ENCODE measurements at regions of chr10 and their contacts with region 1.

Region 1: DNA sequence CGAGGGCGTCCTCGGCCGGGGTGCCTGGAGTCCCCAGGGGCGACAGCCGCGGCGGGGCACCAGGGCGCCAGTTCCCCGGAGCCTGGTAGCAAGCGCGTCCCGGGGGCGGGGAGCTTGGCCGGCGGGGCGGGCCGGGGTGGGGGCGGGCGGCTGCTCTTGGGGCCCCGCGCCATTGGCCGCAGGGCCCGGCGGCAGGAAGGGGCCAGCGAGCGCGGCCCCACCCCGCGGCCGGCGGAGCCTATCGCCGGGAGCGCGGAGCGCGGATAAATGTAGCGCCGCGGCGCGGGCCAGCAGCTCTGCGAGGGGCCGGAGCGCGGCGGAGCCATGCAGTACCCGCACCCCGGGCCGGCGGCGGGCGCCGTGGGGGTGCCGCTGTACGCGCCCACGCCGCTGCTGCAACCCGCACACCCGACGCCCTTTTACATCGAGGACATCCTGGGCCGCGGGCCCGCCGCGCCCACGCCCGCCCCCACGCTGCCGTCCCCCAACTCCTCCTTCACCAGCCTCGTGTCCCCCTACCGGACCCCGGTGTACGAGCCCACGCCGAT is at the start of gene HHEX:
- DNase-seq: peak in 1 of 2 donors; percentile 54
- H3K4me3 ChIP-seq: peak within 1 kb of the TSS; percentile 63 to 82
- H3K27ac ChIP-seq: peak within 1 kb of the TSS; percentile 63 to 75
- H3K4me1 ChIP-seq: peaks cover 0 to 17% (median 10%) of the 10 kb centered on the region in 4 donors
- H3K27me3 ChIP-seq: peaks cover 0 to 25% of the 10 kb centered on the region in 2 donors
- CTCF ChIP-seq: no peak

Region 2: GRCh38 chr10:92592761-92593618 is 96.7 kb before region 1 on chr10 and contains the start of gene KIF11:
- intact Hi-C with region 1: loop called (anchors 10 kb)
- DNase-seq: peak; percentile 99
- H3K4me3 ChIP-seq: peak within 1 kb of the TSS; percentile 60 to 65
- H3K27ac ChIP-seq: peak within 1 kb of the TSS; percentile 90 to 92
- H3K4me1 ChIP-seq: peaks cover 0 to 18% (median 10%) of the 10 kb centered on the region in 4 donors
- H3K27me3 ChIP-seq: no peaks in the 10 kb centered on the region
- CTCF ChIP-seq: no peak

Region 3: GRCh38 chr10:92750791-92751533 is 61.2 kb after region 1 on chr10:
- intact Hi-C with region 1: loop called (anchors 5 kb)
- DNase-seq: no peak
- H3K4me3 ChIP-seq: no peak overlapping the region
- H3K27ac ChIP-seq: no peak overlapping the region
- H3K4me1 ChIP-seq: peaks cover 0 to 5% (median 0%) of the 10 kb centered on the region in 4 donors
- H3K27me3 ChIP-seq: no peaks in the 10 kb centered on the region
- CTCF ChIP-seq: no peak

Region 4: GRCh38 chr10:92848441-92849233 is 158.9 kb after region 1 on chr10 and contains the start of gene EXOC6:
- intact Hi-C with region 1: loop called (anchors 10 kb)
- DNase-seq: peak; percentile 66 to 87
- H3K4me3 ChIP-seq: peak within 1 kb of the TSS; percentile 97 to 98
- H3K27ac ChIP-seq: peak within 1 kb of the TSS; percentile 76 to 78
- H3K4me1 ChIP-seq: peaks cover 0 to 11% (median 9%) of the 10 kb centered on the region in 4 donors
- H3K27me3 ChIP-seq: no peaks in the 10 kb centered on the region
- CTCF ChIP-seq: no peak

Region 5: DNA sequence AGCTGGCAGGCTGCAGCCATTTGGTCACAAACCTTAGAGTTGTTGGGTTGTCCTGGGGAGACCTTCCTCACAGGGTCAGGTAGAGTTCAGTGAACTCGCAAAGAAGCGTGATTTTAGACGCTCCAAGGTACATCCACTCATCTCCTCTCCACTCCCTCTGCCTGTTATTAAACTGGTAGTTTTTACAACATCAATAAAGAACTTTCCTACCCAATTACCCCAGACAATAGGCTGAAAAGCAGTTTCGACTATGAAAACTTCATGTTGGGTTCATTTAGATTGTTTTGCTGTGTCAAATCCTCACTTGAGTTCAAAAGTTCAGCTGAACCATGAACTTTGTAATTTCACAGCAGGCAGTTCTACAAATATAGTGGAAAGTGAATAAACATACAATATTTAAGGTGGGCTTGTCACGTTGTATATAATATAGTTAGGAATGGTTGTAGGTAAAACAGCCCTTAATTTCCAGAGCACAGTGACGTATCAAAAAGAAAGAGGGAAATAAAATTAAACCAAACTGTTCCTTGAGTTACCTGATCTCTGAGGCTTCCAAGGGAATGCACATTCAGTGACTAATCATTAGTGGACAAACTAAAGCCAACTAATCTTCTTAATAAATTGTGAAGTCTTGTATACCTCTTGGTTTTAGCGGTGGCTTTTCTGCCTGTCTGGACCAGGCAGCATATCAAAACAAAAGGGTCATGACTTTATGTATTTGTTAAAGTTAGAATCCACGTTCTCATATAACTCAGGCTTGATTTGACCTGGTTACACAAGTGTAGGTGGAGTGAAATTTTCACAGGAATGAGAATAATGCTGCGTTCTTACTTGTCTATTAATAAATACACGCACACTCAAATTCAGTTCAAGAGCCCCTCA is 484.5 kb after region 1 on chr10:
- intact Hi-C with region 1: no loop called
- DNase-seq: no peak
- H3K4me3 ChIP-seq: no peak overlapping the region
- H3K27ac ChIP-seq: no peak overlapping the region
- H3K4me1 ChIP-seq: no peaks in the 10 kb centered on the region
- H3K27me3 ChIP-seq: no peaks in the 10 kb centered on the region
- CTCF ChIP-seq: no peak

Measured in tibial artery (tissue), 4 donors.